ENCODE measurements at regions of chr20 and their contacts with region 1.

Region 1: GRCh38 chr20:8043687-8044282 is 24.2 kb upstream of the TMX4 start:
- DNase-seq: no peak
- ATAC-seq: peak; percentile 78

Region 2: DNA sequence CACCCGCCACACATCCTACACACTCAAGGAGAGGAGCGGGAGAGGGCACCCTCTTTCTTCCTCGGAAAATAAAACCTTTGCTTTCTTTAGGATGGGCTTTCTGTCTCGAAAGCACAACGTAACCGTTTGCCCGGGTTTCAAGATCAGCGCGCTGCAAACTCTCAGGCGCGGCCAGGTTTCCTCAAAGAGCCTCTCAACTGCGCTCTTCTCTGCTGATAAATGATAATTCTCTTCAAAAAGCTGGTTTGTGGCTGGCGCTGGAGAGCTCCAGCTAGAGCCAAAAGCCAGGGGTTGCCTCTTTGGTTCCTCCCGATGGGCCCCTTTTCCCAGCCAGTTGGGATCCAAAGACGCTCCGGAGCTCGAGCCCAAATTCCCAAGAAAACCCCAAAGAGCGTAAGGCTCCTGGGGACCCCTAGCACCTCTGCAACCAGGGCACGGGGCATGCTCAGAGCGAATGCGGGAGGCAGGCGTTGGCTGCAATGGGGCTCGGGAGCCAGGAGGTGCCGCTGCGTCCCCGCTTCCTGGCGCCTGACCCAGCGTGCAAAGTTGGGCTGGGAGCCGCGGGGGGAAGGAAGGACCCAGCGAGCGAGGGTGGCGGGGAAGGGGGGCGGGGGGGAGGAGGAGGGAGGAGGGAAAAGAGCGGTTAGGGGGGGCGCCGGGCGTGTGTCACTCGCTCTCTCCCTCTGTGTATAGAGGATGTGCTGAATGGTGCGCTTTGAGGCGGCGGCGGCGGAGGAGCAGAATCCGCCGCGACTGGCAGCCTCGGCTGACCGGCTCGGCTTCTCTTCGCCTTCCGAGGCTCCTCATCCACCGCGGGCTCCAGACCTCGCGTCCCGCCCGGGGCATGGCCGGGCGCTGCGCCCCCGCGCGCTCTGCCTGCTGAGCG is 88.1 kb after region 1 on chr20 and contains the start of gene PLCB1:
- intact Hi-C with region 1: loop called in 1 of 2 experiments (anchors 10 kb)
- DNase-seq: peak; percentile 65 to 75
- ATAC-seq: peak; percentile 91
- total RNA-seq, gene PLCB1: 8.5 to 10.9 TPM

Region 3: DNA sequence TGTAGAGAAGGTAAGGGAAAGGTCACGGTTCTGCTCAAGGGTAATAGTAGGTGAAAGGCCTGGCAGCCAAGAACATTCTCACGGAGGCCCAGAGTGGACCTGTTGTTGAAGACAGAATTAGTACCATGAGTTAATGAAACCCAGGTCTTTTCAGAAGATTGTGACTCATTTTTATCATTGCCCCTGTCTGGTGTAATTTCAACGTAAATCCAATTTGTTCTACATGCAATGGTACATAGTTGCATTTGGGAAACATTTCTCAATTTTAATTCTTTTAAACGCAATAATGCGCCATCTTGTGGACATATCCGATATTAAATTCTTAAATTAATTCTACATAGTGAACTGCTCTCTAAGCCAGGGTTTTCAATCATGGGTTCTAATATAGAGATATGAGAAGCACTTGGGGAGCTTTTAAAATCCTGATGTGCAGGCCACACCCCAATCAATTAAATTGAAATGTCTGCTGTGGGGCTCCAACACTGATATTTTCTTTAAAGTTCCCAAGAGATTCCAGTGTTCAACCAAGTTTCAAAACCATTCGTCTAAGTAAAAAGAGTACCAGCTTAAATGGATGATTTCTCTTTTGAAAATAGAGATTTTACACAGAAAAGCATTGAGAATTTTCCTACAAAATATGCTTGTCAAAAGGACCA is 345.7 kb after region 1 on chr20:
- intact Hi-C with region 1: loop called in 1 of 2 experiments (anchors 10 kb)
- DNase-seq: no peak
- ATAC-seq: no peak